Calu3 (cell line): ENCODE measurements at regions of chr15 and their contacts with region 1.

Region 1: GRCh38 chr15:70435369-70435768 is 328.0 kb downstream of the UACA start:
- DNase-seq: no peak
- H3K4me3 Mint-ChIP-seq: no peak overlapping the region
- H3K27ac Mint-ChIP-seq: no peak overlapping the region
- H3K4me1 Mint-ChIP-seq: peaks cover 41% of the 10 kb centered on the region
- H3K27me3 Mint-ChIP-seq: no peaks in the 10 kb centered on the region
- CTCF ChIP-seq: no peak

Region 2: DNA sequence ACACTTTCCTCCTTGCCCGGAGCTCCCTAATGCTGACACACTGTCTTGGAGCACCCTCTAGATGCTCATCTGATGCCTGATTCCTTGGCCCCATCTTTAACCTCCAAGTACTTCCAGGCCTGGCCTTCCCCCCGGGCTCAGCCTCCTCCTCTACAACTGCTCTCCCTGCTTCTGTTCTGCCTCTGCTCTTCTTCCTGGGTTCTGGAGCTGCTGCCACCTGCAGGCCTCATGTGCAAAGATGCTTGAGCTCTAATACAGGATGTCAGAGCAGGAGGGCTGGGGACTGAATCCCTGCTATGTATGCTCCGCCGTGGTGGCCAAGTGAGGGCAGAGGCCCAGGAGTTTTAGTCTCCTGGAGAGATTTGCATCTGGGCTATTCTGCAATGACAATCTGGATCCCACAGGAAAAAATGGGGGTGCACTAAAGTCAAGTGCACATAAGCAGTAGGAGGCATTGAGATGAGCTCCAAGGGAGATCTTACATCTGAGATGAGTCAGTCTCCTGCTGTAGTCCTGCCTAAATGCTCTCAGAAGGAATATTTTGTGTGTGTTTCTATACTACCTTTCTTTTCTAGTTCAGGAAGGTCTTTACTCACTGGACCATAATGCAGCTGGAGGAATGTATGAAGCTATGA is 31.6 kb after region 1 on chr15:
- CTCF ChIA-PET with region 1: interaction called, 26 read pairs
- intact Hi-C with region 1: loop called (anchors 5 kb)
- DNase-seq: peak; percentile 72
- H3K4me3 Mint-ChIP-seq: no peak overlapping the region
- H3K27ac Mint-ChIP-seq: no peak overlapping the region
- H3K4me1 Mint-ChIP-seq: peaks cover 10% of the 10 kb centered on the region
- H3K27me3 Mint-ChIP-seq: peaks cover 24% of the 10 kb centered on the region
- CTCF ChIP-seq: peak; percentile 81

Region 3: GRCh38 chr15:70488002-70488605 is 52.7 kb after region 1 on chr15:
- CTCF ChIA-PET with region 1: interaction called, 3 read pairs
- intact Hi-C with region 1: loop called (anchors 1 kb)
- DNase-seq: peak; percentile 86
- H3K4me3 Mint-ChIP-seq: no peak overlapping the region
- H3K27ac Mint-ChIP-seq: no peak overlapping the region
- H3K4me1 Mint-ChIP-seq: peaks cover 45% of the 10 kb centered on the region
- H3K27me3 Mint-ChIP-seq: peaks cover 4% of the 10 kb centered on the region
- CTCF ChIP-seq: peak; percentile 95

Region 4: GRCh38 chr15:70504299-70504951 is 69.1 kb after region 1 on chr15:
- CTCF ChIA-PET with region 1: interaction called, 3 read pairs
- intact Hi-C with region 1: loop called (anchors 2 kb)
- DNase-seq: no peak
- H3K4me3 Mint-ChIP-seq: peak overlapping the region; percentile 24
- H3K27ac Mint-ChIP-seq: peak overlapping the region; percentile 87
- H3K4me1 Mint-ChIP-seq: peaks cover 85% of the 10 kb centered on the region
- H3K27me3 Mint-ChIP-seq: no peaks in the 10 kb centered on the region
- CTCF ChIP-seq: no peak

Region 5: GRCh38 chr15:70513819-70514218 is 78.5 kb after region 1 on chr15:
- CTCF ChIA-PET with region 1: interaction called, 5 read pairs
- intact Hi-C with region 1: loop called (anchors 1 kb)
- DNase-seq: no peak
- H3K4me3 Mint-ChIP-seq: no peak overlapping the region
- H3K27ac Mint-ChIP-seq: no peak overlapping the region
- H3K4me1 Mint-ChIP-seq: peaks cover 34% of the 10 kb centered on the region
- H3K27me3 Mint-ChIP-seq: no peaks in the 10 kb centered on the region
- CTCF ChIP-seq: no peak

Region 6: DNA sequence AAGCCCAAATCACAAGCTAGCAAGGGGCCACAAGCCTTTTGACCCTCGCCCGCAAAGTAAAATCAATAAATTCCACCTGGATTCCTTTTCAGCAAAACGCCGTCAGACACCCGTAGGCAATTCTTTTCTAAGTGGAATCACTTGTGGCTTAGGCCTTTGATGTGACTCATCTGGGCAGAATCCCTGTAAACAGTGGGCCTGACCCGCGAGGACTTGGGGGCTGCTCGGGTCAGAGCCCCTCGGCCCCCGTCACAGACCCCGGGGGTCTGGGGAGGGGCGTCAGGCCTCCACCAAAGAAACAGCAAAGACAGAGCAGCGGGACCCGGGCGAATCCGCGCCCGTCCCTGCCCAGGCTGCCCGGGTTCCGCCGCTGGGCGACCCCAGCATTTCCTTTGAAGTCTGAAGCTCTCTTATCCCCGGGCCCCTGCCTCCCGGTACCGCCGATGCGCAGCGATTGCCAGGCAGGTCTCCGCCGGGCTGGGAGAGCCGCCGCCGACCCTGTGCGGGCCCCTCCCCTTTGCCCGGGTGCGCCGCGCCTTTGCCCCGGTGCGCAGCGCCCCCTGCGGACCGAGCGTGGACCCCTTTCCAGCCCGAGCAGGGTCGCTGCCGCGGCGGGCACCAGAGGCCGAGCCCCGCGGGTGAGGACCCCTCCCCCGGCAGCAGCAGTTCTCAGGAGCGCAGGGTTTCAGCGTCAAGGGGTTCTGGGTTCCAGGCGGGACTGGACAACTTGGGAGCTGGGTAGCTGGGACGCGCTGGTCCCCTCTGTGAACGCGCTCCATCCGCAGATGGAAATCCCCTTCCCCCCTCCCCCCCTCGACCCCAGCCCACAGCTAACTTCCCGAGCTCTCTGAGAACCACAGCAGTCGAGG is 149.7 kb after region 1 on chr15:
- CTCF ChIA-PET with region 1: interaction called, 4 read pairs
- intact Hi-C with region 1: loop called (anchors 10 kb)
- DNase-seq: peak; percentile 82
- H3K4me3 Mint-ChIP-seq: peak overlapping the region; percentile 73
- H3K27ac Mint-ChIP-seq: no peak overlapping the region
- H3K4me1 Mint-ChIP-seq: peaks cover 11% of the 10 kb centered on the region
- H3K27me3 Mint-ChIP-seq: no peaks in the 10 kb centered on the region
- CTCF ChIP-seq: peak; percentile 79

Region 7: DNA sequence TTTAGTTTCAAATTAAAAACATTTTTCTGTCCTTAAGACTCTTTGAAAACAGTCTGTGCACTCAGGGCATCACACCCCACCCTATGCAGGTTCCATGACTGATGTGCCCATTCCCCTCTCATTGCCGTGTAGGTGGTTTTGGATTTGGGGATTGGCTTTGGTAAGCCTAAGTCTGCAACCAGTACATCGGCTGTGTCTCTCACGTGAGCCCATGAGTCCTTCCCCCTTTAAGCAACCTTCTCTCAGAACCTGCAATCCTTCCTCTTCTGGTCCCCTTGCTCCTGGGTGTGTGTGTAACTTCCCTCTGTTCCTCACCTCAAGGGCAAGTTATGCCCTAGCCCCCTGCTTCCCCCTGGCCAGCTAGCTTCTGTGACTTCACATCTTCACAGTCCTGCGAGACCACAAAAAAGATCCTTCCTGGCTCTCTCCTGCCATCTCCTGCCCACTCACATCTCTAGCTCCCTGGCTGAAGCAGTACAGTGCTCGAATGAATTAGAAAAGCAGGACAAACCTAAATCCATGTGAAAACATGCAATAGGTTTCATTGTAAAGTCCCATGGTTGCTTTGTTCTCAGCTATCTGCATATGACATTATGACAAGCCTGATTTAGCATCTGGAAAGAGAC is 201.3 kb after region 1 on chr15:
- CTCF ChIA-PET with region 1: interaction called, 11 read pairs
- intact Hi-C with region 1: no loop called
- DNase-seq: peak; percentile 50
- H3K4me3 Mint-ChIP-seq: no peak overlapping the region
- H3K27ac Mint-ChIP-seq: no peak overlapping the region
- H3K4me1 Mint-ChIP-seq: peaks cover 29% of the 10 kb centered on the region
- H3K27me3 Mint-ChIP-seq: no peaks in the 10 kb centered on the region
- CTCF ChIP-seq: no peak